ENCODE measurements at regions of chr19 and their contacts with region 1.

Region 1: DNA sequence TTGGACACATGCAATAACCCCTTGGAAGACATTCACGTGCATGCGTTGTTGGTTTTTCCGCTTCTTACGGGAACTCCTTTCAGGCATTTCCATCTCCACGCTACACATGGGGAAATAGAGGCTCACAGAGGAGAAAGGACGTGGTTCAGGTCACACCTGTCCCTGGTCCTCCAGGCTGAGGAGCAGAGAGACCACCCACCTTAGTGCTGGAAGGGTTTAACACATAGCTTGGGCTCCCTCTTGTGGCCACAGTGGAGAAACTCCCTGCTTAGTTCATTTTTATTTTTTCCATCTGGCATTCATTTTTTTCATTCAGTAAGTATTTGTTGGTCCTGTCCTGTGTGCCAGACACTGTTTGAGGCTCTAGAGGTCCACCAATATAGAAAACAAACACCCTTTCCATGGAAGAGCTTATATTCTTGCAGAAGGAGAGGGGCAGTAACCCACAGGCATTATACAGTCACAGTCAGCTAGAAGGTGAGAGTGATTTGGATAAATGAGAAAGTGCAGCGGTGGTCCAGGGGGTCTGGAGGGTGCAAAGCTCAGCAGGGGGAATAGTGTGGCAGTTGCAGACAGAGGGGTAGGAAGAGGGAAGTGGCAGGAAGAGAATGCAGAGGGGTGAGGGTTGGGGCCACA is 24.2 kb upstream of the TTYH1 start:
- DNase-seq: peak; percentile 71
- CTCF ChIP-seq: peak; percentile 78

Region 2: DNA sequence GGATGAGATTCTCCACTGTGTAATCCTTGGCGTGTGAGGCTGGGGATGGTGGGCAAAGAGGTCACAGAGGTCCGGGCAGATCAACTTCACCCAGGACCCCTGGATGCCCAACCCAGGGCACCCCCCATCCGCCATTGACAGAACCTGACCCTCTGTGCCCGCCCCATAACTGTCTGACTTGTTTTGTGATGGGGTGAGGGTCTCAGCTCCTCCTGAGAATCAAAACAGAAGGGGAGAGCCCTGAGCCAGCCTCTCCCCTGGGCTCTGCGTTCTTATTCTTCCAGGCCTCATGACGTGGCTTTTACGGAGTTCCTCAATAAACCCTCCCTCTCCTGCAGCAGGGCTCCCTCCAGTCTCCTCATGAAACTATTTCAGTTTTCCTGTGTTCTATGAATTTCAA is 152.0 kb before region 1 on chr19:
- CTCF ChIA-PET with region 1: no interaction called
- POLR2A ChIA-PET with region 1: no interaction called
- DNase-seq: no peak
- CTCF ChIP-seq: no peak

Region 3: DNA sequence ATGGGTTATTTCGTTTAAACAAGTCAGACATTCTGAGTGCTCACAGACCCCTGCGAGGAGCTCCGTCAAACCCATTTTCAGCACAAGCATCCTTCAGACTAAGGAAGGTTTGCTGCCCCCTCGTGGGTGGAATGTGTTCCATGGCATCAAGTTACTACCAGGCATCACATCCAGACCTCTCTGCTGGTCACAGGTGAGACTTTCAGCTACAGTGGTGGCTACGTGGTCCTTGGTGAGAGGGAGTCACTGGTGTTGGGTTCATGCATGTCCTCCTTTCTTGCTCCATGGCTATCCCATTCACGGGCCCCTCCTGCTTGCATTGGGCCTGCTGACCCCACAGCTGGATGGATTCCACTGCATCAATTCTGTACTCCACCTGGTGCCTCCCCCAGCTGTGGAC is 124.9 kb before region 1 on chr19:
- CTCF ChIA-PET with region 1: interaction called, 11 read pairs
- POLR2A ChIA-PET with region 1: no interaction called
- DNase-seq: peak; percentile 70
- CTCF ChIP-seq: peak; percentile 72

Region 4: DNA sequence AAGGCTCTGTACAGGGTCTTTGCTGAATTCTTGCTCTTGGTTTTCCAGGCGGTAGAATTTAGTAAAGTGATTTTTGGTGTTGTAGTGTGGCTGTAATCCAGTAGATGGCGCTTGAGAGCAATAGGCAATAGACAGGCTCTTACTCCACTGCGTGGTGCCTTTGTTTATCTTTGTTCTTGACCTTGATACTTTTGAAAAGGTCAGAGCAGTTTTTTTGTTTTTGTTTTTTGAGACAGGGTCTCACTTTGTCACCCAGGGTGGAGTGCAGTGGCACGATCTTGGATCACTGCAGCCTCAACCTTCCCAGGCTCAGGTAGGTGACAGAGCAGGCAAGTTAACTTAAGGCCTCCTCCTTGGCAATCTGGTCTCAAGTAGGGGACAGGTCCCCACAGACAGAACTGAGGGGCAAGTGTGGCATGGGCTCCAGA is 65.9 kb before region 1 on chr19:
- CTCF ChIA-PET with region 1: interaction called, 25 read pairs
- POLR2A ChIA-PET with region 1: no interaction called
- DNase-seq: peak; percentile 66
- CTCF ChIP-seq: peak; percentile 64

Region 5: GRCh38 chr19:54357381-54357780 is 33.7 kb before region 1 on chr19:
- CTCF ChIA-PET with region 1: interaction called, 31 read pairs
- POLR2A ChIA-PET with region 1: no interaction called
- DNase-seq: no peak
- CTCF ChIP-seq: no peak

Region 6: GRCh38 chr19:54373781-54374631 is 17.1 kb before region 1 on chr19:
- CTCF ChIA-PET with region 1: interaction called, 24 read pairs
- POLR2A ChIA-PET with region 1: no interaction called
- DNase-seq: no peak
- CTCF ChIP-seq: no peak

Measured in GM10248 (cell line).